Vagina (tissue), 2 donors: ENCODE measurements at regions of chr2 and their contacts with region 1.

Region 1: GRCh38 chr2:218269899-218270720 is at the starts of genes AAMP and PNKD:
- DNase-seq: peak; percentile 99 to 100
- H3K4me3 ChIP-seq: peak within 1 kb of the TSS; percentile 94 to 95
- H3K27ac ChIP-seq: peak within 1 kb of the TSS; percentile 94
- H3K4me1 ChIP-seq: peaks cover 53% of the 10 kb centered on the region
- H3K27me3 ChIP-seq: no peaks in the 10 kb centered on the region
- CTCF ChIP-seq: peak in 1 of 3 experiments; percentile 15
- POLR2A ChIP-seq: peak in 1 of 2 donors; percentile 88
- total RNA-seq, gene AAMP: 106 TPM
- total RNA-seq, gene PNKD: 28.7 TPM

Region 2: DNA sequence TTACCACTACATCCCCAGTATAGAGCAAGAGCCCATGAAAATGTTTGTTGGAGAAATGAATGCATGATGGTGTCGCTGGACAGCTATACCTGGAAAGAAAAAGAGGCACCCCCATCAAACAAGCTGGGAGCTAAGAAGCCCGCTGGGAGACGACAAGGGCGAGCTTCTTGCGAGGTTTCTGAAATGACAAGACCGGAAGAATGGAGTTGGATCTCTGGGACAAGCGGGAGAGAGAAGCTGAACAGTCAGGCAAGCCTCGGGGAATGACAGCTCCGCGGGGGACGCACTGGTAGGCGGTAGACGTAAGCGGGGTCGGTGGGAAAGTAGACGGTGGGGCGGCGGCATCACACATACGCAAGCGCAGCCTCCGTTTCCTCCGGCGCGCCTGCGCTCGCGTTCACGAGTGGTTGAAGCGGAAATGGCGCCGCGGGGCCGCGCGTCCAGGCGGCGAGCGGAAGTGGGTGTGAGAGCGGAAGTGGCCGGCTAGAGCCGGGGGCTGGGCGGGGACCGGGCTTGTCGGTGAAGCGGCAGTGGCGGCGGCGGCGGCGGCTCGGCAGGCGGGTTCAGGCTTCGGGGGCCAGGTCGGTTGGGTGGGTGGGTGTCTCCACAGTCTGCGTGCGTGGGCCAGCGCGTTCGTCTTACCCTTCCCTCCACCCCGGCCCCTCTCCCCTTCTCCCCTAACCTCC is 53.3 kb before region 1 on chr2 and contains the start of gene ARPC2:
- intact Hi-C with region 1: loop called (anchors 5 kb)
- DNase-seq: peak in 1 of 2 donors; percentile 94
- H3K4me3 ChIP-seq: peak within 1 kb of the TSS; percentile 95 to 97
- H3K27ac ChIP-seq: peak within 1 kb of the TSS; percentile 92
- H3K4me1 ChIP-seq: peaks cover 49% of the 10 kb centered on the region
- H3K27me3 ChIP-seq: no peaks in the 10 kb centered on the region
- CTCF ChIP-seq: peak in 1 of 3 experiments; percentile 51
- POLR2A ChIP-seq: peak in 1 of 2 donors; percentile 78
- total RNA-seq, gene ARPC2: 284 TPM

Region 3: DNA sequence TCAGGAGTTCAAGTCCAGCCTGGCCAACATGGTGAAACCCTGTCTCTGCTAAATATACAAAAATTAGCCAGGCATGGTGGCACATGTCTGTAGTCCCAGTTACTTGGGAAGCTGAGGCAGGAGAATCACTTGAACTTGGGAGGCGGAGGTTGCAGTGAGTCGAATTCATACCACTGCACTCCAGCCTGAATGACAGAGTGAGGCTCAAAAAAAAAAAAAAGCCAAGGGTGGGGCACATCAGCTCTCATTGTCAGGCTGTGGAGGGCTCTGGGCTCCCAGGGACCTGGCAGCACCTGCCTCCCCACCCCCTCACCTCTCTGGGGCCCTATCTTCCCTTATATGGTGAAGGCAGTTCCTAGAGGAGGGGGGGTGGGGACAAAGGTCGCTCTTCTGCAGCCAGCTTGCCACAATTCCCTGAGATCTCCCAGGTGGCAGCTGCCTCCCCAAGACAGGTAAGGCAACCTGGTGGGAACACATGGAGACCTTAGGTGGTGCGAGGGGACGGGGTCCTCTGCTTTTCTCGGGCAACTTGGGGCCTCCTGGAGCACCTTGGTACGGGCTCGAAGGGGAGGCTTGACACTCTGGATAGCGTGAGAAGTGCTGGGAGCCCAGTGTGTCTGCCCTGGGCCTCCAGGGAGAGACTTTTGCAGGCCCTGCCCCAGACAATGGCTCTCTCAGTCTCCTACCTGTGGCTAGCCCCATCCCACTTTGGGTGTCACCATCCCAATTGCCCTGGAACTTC is 148.8 kb after region 1 on chr2 and contains the start of gene VIL1:
- intact Hi-C with region 1: no loop called
- DNase-seq: no peak
- H3K4me3 ChIP-seq: no peak within 1 kb of the TSS
- H3K27ac ChIP-seq: no peak within 1 kb of the TSS
- H3K4me1 ChIP-seq: no peaks in the 10 kb centered on the region
- H3K27me3 ChIP-seq: no peaks in the 10 kb centered on the region
- CTCF ChIP-seq: no peak
- POLR2A ChIP-seq: no peak
- total RNA-seq, gene VIL1: not detected